Head of caudate nucleus (tissue), 42 donors: ENCODE measurements at regions of chr14 and their contacts with region 1.

Region 1: DNA sequence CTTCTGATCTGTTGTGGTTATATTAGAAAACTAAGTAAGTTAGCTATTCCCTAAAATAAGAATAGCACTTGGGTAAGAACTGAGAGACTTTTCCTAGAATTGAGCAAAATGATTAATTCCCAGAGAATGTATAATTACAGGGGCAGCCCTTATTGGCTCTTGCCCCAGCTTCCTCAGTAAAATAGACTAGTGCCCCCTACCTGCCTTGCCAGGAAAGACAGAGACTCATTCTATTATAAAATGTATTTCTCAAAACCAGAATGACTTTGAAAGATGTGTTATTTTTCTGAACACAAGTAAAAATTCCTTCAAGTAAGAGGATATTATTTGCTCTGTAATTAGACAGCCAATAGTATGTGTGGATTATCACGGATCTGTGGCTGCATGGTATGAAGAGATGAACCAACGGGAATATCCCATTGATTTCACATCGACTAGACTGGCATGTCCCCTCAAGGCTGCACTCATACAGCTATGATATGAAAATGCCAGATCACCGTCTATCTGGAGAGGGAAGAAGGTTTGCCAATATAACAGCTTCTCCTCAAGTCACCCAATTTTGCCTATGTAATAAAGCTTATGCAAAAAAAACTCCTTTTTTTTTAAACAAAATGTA is 7.4 kb upstream of the GLRX5 start:
- DNase-seq: peak in 30 of 42 donors; percentile 39 to 90 (median 69)

Region 2: GRCh38 chr14:95291859-95292542 is 235.5 kb before region 1 on chr14:
- intact Hi-C with region 1: no loop called
- DNase-seq: peak in 41 of 42 donors; percentile 42 to 93 (median 73)

Region 3: GRCh38 chr14:95442633-95443021 is 84.9 kb before region 1 on chr14:
- intact Hi-C with region 1: loop called (anchors 2 kb)
- DNase-seq: peak; percentile 75 to 95 (median 89)